ENCODE measurements at regions of chr4 and their contacts with region 1.

Region 1: DNA sequence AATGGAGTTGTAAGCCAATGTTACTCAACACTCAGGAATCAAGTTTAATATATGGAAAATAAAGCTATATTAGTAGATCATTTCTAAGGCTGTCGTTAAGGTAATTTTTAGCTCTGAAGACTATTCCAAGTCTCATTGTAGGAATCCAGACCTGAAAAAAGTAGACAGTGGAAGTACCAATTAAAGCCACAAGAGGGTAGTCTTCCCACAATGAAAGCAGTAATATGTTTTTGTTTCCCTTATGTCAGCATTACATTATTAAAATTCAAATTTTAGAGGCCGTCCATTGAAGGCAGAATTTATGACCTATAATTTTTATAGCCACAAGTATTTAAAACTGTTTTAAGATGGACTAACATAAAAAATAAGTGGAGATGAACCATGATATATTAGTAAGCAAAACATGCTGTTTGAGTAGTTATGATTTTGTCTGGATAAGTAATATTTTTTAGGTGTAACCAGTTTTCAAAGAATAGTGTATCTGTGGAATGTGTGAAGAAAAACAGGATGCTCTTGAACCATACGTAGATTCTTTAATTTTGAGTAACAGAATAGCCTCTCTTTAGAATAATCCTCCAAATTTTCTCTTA is 372.6 kb upstream of the TECRL start:
- DNase-seq: peak in 1 of 2 experiments; percentile 28
- H3K4me3 ChIP-seq: no peak overlapping the region
- H3K4me3 Mint-ChIP-seq: no peak overlapping the region
- H3K27ac Mint-ChIP-seq: no peak overlapping the region
- H3K4me1 ChIP-seq: no peaks in the 10 kb centered on the region
- H3K4me1 Mint-ChIP-seq: no peaks in the 10 kb centered on the region
- H3K27me3 ChIP-seq: no peaks in the 10 kb centered on the region
- H3K27me3 Mint-ChIP-seq: no peaks in the 10 kb centered on the region
- CTCF ChIP-seq: peak; percentile 51 to 61

Region 2: DNA sequence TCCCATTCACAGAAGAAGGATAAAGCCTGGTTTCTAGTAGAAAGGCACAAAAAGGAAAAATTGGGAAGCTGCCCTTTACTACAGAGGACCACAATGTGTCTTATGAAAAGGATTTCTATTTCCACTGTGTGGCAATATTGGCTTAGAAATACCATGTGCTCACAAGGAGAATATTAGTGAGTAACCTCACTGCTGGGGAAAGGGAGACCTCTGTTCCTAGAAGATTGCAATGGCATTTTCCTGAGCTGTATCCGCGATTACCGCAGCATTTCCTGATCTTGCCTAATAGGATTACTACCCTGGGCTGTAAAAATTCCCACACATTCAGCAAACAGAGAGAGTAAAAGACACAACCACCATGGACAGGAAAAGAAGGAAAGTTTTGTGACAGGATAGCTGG is 63.7 kb before region 1 on chr4:
- CTCF ChIA-PET with region 1: no interaction called
- POLR2A ChIA-PET with region 1: no interaction called
- intact Hi-C with region 1: loop called (anchors 5 kb)
- DNase-seq: no peak
- H3K4me3 ChIP-seq: no peak overlapping the region
- H3K4me3 Mint-ChIP-seq: no peak overlapping the region
- H3K27ac Mint-ChIP-seq: no peak overlapping the region
- H3K4me1 ChIP-seq: no peaks in the 10 kb centered on the region
- H3K4me1 Mint-ChIP-seq: no peaks in the 10 kb centered on the region
- H3K27me3 ChIP-seq: no peaks in the 10 kb centered on the region
- H3K27me3 Mint-ChIP-seq: no peaks in the 10 kb centered on the region
- CTCF ChIP-seq: no peak

Region 3: DNA sequence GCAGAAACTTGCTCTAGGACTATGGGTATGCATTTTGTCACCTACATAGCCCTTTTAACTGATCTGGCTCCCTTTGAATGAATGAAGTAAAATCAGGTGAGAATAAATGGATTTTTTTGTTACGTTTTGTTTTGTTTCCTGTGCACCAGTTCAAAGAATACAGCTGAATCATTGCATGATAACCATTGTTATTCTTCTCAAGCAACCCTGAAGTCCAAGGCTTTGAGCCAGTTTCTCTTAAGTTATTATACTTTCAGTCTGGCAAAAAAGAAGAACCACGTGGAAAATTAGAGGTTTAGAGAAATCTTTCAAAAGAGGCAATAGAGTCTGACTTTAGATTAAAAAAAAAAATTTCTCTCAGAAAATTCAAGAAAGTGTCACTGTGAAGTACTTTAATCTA is 26.0 kb after region 1 on chr4:
- CTCF ChIA-PET with region 1: no interaction called
- POLR2A ChIA-PET with region 1: no interaction called
- intact Hi-C with region 1: no loop called
- DNase-seq: no peak
- H3K4me3 ChIP-seq: no peak overlapping the region
- H3K4me3 Mint-ChIP-seq: no peak overlapping the region
- H3K27ac Mint-ChIP-seq: no peak overlapping the region
- H3K4me1 ChIP-seq: no peaks in the 10 kb centered on the region
- H3K4me1 Mint-ChIP-seq: no peaks in the 10 kb centered on the region
- H3K27me3 ChIP-seq: no peaks in the 10 kb centered on the region
- H3K27me3 Mint-ChIP-seq: no peaks in the 10 kb centered on the region
- CTCF ChIP-seq: no peak

Region 4: GRCh38 chr4:65580551-65580950 is 798.7 kb after region 1 on chr4:
- CTCF ChIA-PET with region 1: no interaction called
- POLR2A ChIA-PET with region 1: no interaction called
- intact Hi-C with region 1: no loop called
- DNase-seq: no peak
- H3K4me3 ChIP-seq: no peak overlapping the region
- H3K4me3 Mint-ChIP-seq: no peak overlapping the region
- H3K27ac Mint-ChIP-seq: no peak overlapping the region
- H3K4me1 ChIP-seq: no peaks in the 10 kb centered on the region
- H3K4me1 Mint-ChIP-seq: no peaks in the 10 kb centered on the region
- H3K27me3 ChIP-seq: no peaks in the 10 kb centered on the region
- H3K27me3 Mint-ChIP-seq: peaks cover 7% of the 10 kb centered on the region
- CTCF ChIP-seq: no peak

Measured in Caco-2 (cell line).